ENCODE measurements at regions of chr19 and their contacts with region 1.

Region 1: DNA sequence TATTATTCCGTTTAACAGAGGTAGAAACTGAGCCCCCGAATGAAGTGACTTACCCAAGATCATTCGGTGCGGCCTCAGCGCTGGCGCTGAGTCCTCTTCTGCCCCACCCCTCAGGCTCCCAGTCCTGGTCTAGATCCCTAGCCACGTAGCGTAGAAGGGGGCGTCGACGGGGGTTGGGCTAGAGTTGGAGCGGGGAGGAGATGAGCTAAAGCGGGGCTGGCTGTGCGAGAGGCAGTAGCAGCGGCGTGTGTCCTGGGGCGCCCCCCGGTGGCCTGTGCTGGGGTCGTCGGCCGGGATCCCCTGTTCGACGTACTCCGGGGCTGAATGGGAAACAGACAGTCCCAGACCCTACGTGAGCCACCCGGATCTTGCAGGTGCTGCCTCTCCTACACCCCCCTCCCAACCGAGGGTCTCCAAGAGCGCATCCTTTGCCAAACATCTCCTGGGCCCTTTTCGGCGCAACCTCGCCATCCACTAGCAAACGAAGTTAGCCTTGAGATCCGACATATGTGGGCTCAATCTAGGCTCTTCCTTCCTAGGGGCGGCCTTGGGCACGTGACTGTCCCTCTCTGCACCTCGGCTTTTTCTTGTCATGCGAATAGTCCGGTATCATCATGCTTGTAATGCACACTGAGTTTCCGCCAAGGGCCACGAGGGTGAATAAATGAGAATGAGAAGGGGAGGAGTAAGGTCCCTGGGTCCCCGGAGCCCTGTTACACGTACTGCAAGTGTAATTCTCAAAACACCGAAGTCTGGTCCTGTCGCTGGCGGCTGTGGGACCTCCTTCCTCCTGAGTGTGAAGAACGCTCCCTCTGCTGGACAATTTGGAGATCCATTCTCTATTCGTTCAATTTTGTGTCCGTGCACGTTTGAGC is 47.7 kb downstream of the CYP4F22 start:
- DNase-seq: peak; percentile 93
- CTCF ChIP-seq: peak; percentile 94

Region 2: GRCh38 chr19:15177269-15178116 is 378.5 kb before region 1 on chr19:
- in situ Hi-C with region 1: loop called (anchors 10 kb)
- DNase-seq: peak; percentile 92
- CTCF ChIP-seq: peak; percentile 99

Region 3: GRCh38 chr19:15264061-15264932 is 291.7 kb before region 1 on chr19:
- in situ Hi-C with region 1: loop called (anchors 25 kb)
- DNase-seq: peak; percentile 80
- CTCF ChIP-seq: peak; percentile 80

Region 4: GRCh38 chr19:15419413-15420025 is 136.5 kb before region 1 on chr19:
- in situ Hi-C with region 1: loop called (anchors 10 kb)
- DNase-seq: no peak
- CTCF ChIP-seq: no peak

Region 5: GRCh38 chr19:15629003-15629880 is 73.2 kb after region 1 on chr19:
- in situ Hi-C with region 1: no loop called
- DNase-seq: peak; percentile 84
- CTCF ChIP-seq: peak; percentile 93